Gastrocnemius medialis (tissue), 4 donors: ENCODE measurements at regions of chr16 and their contacts with region 1.

Region 1: GRCh38 chr16:1308977-1309885 is at the start of gene UBE2I:
- DNase-seq: peak; percentile 94 to 96
- ATAC-seq: peak; percentile 91
- H3K4me3 ChIP-seq: peak within 1 kb of the TSS; percentile 67 to 95 (median 80)
- H3K27ac ChIP-seq: peak within 1 kb of the TSS; percentile 91 to 99 (median 96)
- H3K4me1 ChIP-seq: peaks cover 30 to 44% of the 10 kb centered on the region in 2 donors
- H3K27me3 ChIP-seq: no peaks in the 10 kb centered on the region
- CTCF ChIP-seq: no peak
- POLR2A ChIP-seq: peak; percentile 57 to 76
- total RNA-seq, gene UBE2I: 28.9 to 80.4 (median 41.7) TPM

Region 2: GRCh38 chr16:684067-684794 is 625.0 kb before region 1 on chr16 and contains the start of gene JMJD8:
- in situ Hi-C with region 1: no loop called
- intact Hi-C with region 1: loop called (anchors 10 kb)
- DNase-seq: peak; percentile 94
- ATAC-seq: peak; percentile 72 to 76
- H3K4me3 ChIP-seq: peak within 1 kb of the TSS; percentile 84 to 87 (median 86)
- H3K27ac ChIP-seq: peak within 1 kb of the TSS; percentile 73 to 87 (median 83)
- H3K4me1 ChIP-seq: peaks cover 35 to 57% of the 10 kb centered on the region in 2 donors
- H3K27me3 ChIP-seq: no peaks in the 10 kb centered on the region
- CTCF ChIP-seq: no peak
- POLR2A ChIP-seq: peak; percentile 53 to 60
- total RNA-seq, gene JMJD8: 22.8 to 81.8 (median 41.0) TPM

Region 3: DNA sequence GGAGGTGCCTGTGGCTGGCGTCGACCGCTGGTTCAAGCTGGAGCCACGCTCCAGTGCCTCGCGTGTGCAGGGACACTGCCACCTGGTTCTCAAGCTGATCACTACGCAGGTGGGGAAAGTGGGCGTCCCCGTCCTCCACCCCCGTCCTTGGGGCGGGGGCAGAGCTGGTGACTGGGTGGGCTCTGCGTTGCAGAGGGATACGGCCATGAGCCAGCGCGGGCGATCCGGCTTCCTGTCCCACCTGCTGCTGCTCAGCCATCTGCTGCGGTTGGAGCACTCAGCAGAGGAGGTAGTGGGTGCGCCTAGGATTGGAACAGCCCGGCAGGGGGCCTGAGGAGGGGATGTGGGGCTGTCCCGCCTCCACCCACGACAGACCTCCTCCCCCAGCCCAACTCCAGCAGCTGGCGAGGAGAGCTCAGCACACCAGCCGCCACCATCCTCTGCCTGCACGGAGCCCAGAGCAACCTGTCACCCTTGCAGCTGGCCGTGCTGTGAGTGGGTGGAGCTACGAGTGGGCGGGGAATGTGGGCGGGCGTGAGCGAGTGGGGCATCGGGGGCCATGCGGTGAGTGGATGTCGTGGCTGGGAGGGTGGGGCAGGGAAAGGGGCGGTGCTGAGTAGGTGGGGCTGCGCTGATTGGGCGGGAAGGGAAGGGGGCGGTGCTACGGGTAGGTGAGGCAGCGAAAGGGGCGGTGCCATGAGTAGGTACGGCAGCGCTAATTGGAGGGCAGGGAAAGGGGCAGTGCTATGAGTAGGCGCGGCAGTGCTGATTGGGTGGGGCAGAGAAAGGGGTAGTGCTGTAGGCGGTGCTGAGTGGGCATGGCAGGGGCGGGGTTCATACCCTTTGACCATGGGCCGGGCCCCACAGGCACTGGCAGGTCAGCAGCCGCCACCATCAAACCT is 33.5 kb after region 1 on chr16:
- in situ Hi-C with region 1: no loop called
- intact Hi-C with region 1: loop called (anchors 5 kb)
- DNase-seq: peak; percentile 95 to 98
- ATAC-seq: peak; percentile 97 to 98
- H3K4me3 ChIP-seq: peak overlapping the region; percentile 35 to 49 (median 46)
- H3K27ac ChIP-seq: peak overlapping the region in 1 of 4 donors; percentile 46
- H3K4me1 ChIP-seq: peaks cover 4 to 12% of the 10 kb centered on the region in 2 donors
- H3K27me3 ChIP-seq: no peaks in the 10 kb centered on the region
- CTCF ChIP-seq: no peak
- POLR2A ChIP-seq: no peak

Region 4: GRCh38 chr16:1351582-1352362 is 42.5 kb after region 1 on chr16 and contains the starts of genes GNPTG and TSR3:
- in situ Hi-C with region 1: no loop called
- intact Hi-C with region 1: loop called (anchors 2 kb)
- DNase-seq: peak; percentile 55 to 78
- ATAC-seq: peak; percentile 72 to 85
- H3K4me3 ChIP-seq: peak within 1 kb of the TSS; percentile 76 to 98 (median 86)
- H3K27ac ChIP-seq: peak within 1 kb of the TSS; percentile 44 to 84 (median 60)
- H3K4me1 ChIP-seq: peaks cover 21 to 45% of the 10 kb centered on the region in 2 donors
- H3K27me3 ChIP-seq: no peaks in the 10 kb centered on the region
- CTCF ChIP-seq: peak in 3 of 5 experiments; percentile 6 to 62 (median 53)
- POLR2A ChIP-seq: peak; percentile 54 to 58
- total RNA-seq, gene GNPTG: 20.6 to 37.5 (median 30.2) TPM
- total RNA-seq, gene TSR3: 63.3 to 103 (median 72.4) TPM

Region 5: GRCh38 chr16:1474796-1475551 is 165.7 kb after region 1 on chr16 and contains the start of gene CLCN7:
- in situ Hi-C with region 1: no loop called
- intact Hi-C with region 1: loop called (anchors 5 kb)
- DNase-seq: peak; percentile 86 to 91
- ATAC-seq: peak; percentile 93 to 97
- H3K4me3 ChIP-seq: peak within 1 kb of the TSS; percentile 80 to 100 (median 86)
- H3K27ac ChIP-seq: peak within 1 kb of the TSS; percentile 90 to 98 (median 94)
- H3K4me1 ChIP-seq: peaks cover 14 to 27% of the 10 kb centered on the region in 2 donors
- H3K27me3 ChIP-seq: no peaks in the 10 kb centered on the region
- CTCF ChIP-seq: peak in 2 of 5 experiments; percentile 21 to 56
- POLR2A ChIP-seq: peak; percentile 95 to 97
- total RNA-seq, gene CLCN7: 24.8 to 45.8 (median 38.4) TPM